GM12878 (cell line): ENCODE measurements at regions of chr5 and their contacts with region 1.

Region 1: DNA sequence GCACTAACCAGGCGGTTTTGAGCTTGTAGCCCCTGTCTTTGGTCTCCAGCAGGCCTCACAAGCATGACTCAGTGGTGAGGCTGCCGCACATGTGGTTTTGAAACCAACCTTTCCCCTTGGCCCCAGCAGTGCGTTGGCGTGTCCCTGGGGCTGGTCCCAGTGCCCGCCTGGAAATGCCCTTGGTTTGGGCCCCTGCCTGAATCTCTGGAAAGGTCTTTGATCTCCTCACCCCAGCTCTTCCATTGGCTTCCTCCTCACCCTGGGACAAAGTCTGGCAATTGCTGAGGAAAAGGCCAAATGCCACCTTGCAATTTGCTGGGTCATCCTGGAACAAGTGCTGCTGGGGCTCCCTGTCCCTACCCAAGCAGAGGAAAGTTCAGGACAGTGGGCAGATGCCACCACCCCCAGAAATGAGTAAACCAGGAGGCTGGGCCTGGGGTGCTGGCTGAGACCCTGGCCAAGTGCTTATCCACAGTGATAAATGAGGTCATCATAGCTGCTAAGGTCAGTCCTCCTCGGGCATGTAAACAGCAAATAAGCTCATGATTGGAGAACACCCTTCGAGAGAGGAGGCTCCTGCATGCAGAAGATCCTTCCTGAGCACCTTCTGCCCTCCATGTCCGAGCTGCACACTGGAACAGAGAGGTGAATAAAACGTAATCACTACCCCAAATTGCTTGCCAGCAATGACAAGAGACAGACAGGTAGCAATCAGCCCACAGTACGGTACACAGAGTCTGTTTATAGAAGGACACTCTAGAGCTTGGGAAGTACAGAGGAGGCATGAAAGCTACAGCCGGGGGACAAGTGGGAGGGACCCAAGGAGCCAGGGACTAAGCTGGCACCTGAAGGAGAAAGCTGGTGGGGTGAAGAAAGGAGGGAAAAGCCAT is 98.9 kb upstream of the CPEB4 start:
- DNase-seq: no peak
- ATAC-seq: peak; percentile 23; the same call in 2 of the 3 replicates
- H3K4me3 ChIP-seq: no peak overlapping the region
- H3K27ac ChIP-seq: no peak overlapping the region
- H3K4me1 ChIP-seq: peaks cover 50% of the 10 kb centered on the region
- H3K27me3 ChIP-seq: no peaks in the 10 kb centered on the region
- CTCF ChIP-seq: no peak
- EP300 ChIP-seq: no peak
- POLR2A ChIP-seq: no peak
- RAD21 ChIP-seq: no peak

Region 2: GRCh38 chr5:173625696-173626504 is 163.4 kb before region 1 on chr5:
- CTCF ChIA-PET with region 1: interaction called, 34 read pairs
- POLR2A ChIA-PET with region 1: no interaction called
- RAD21 ChIA-PET with region 1: interaction called, 15 read pairs
- SMC1A ChIA-PET with region 1: interaction called, 20 read pairs
- in situ Hi-C with region 1: no loop called
- intact Hi-C with region 1: no loop called
- DNase-seq: no peak
- ATAC-seq: peak; percentile 81
- H3K4me3 ChIP-seq: no peak overlapping the region
- H3K27ac ChIP-seq: no peak overlapping the region
- H3K4me1 ChIP-seq: peaks cover 9% of the 10 kb centered on the region
- H3K27me3 ChIP-seq: no peaks in the 10 kb centered on the region
- CTCF ChIP-seq: peak; percentile 60 to 71 (median 61)
- EP300 ChIP-seq: no peak
- POLR2A ChIP-seq: no peak
- RAD21 ChIP-seq: peak; percentile 85

Region 3: DNA sequence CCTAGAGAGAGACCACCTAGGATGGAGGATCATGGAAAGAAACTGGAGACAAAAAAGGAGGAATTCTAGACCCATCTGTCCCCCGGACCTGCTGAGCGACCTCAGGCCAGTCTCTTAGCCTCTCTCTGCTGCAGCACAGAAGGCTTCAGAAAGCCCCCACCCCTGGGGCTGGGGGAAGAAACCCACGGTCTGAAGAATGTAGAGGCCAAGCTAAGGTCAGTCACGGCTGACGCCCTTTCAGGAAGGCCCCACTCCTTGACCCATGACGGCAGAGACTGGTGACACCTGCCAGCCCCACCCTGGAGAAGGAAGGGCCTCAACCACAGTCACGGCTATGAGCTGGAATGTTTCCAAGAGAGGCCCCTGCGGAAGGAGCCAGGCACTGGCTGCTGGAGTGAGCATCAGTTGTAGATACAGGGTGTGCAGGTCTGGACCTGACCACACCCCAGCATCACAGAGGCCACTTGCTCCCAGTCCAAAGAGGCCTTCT is 52.3 kb before region 1 on chr5:
- CTCF ChIA-PET with region 1: interaction called, 10 read pairs
- POLR2A ChIA-PET with region 1: interaction called, 4 read pairs
- RAD21 ChIA-PET with region 1: interaction called, 45 read pairs
- SMC1A ChIA-PET with region 1: interaction called, 24 read pairs
- in situ Hi-C with region 1: no loop called
- intact Hi-C with region 1: no loop called
- DNase-seq: peak; percentile 76
- ATAC-seq: peak; percentile 91
- H3K4me3 ChIP-seq: peak overlapping the region; percentile 30; the same call in 1 of the 2 replicates
- H3K27ac ChIP-seq: peak overlapping the region; percentile 76
- H3K4me1 ChIP-seq: peaks cover 63% of the 10 kb centered on the region
- H3K27me3 ChIP-seq: no peaks in the 10 kb centered on the region
- CTCF ChIP-seq: no peak
- EP300 ChIP-seq: peak; percentile 47 to 49; a peak in 1 of 4 replicates
- POLR2A ChIP-seq: peak; percentile 48; the same call in 1 of the 2 replicates
- RAD21 ChIP-seq: 0 out of 2 replicates have a peak, but pooled peaks have one; percentile 10

Region 4: GRCh38 chr5:173823711-173824528 is 34.6 kb after region 1 on chr5:
- CTCF ChIA-PET with region 1: interaction called, 87 read pairs
- POLR2A ChIA-PET with region 1: interaction called, 36 read pairs
- RAD21 ChIA-PET with region 1: interaction called, 147 read pairs
- SMC1A ChIA-PET with region 1: interaction called, 271 read pairs
- in situ Hi-C with region 1: no loop called
- intact Hi-C with region 1: loop called (anchors 1 kb)
- DNase-seq: no peak
- ATAC-seq: no peak
- H3K4me3 ChIP-seq: no peak overlapping the region
- H3K27ac ChIP-seq: peak overlapping the region; percentile 96
- H3K4me1 ChIP-seq: peaks cover 55% of the 10 kb centered on the region
- H3K27me3 ChIP-seq: no peaks in the 10 kb centered on the region
- CTCF ChIP-seq: no peak
- EP300 ChIP-seq: no peak
- POLR2A ChIP-seq: no peak
- RAD21 ChIP-seq: no peak

Region 5: GRCh38 chr5:173895401-173896165 is 106.3 kb after region 1 on chr5:
- CTCF ChIA-PET with region 1: interaction called, 86 read pairs
- POLR2A ChIA-PET with region 1: interaction called, 8 read pairs
- RAD21 ChIA-PET with region 1: interaction called, 20 read pairs
- SMC1A ChIA-PET with region 1: interaction called, 56 read pairs
- in situ Hi-C with region 1: no loop called
- intact Hi-C with region 1: loop called (anchors 2 kb)
- DNase-seq: no peak
- ATAC-seq: peak; percentile 1; the same call in 1 of the 3 replicates
- H3K4me3 ChIP-seq: peak overlapping the region; percentile 54
- H3K27ac ChIP-seq: peak overlapping the region; percentile 65
- H3K4me1 ChIP-seq: peaks cover 3% of the 10 kb centered on the region; the same call in 1 of the 2 replicates
- H3K27me3 ChIP-seq: no peaks in the 10 kb centered on the region
- CTCF ChIP-seq: no peak
- EP300 ChIP-seq: no peak
- POLR2A ChIP-seq: no peak
- RAD21 ChIP-seq: no peak

Region 6: DNA sequence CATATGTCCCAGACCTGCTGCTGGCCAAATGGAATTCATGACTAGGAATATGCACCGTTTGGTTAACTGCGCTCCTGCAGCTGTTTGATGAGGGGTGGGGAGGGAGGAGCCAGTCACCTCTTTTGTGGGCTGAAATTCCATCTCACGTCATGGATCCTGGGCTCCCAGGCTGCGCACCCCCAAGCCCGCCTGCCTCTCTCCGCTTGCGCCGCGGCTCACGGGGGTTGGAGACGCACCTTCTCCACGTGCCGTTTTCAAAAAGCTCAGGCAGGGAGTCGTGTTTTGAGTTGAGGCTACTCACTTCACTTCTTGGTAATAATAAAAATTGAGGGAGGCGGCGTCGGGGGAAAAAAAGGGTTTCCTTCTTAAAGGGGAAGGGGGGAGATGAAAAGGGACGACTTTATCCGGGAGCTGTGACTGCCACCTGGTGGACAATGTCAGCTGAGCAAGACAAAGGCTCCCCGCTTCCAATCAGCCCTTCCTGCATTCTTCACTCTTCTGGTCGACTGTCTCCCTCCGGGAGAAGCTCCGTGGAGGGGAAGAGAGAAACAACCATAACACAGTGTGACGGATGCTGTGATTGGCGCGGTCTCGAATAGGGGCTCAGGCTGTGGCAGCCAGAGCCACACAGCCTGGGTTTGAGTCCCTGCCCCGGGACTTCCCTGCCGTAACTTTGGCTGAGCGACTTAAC is 183.8 kb after region 1 on chr5:
- CTCF ChIA-PET with region 1: interaction called, 7 read pairs
- POLR2A ChIA-PET with region 1: no interaction called
- RAD21 ChIA-PET with region 1: interaction called, 4 read pairs
- SMC1A ChIA-PET with region 1: interaction called, 8 read pairs
- in situ Hi-C with region 1: no loop called
- intact Hi-C with region 1: loop called (anchors 5 kb)
- DNase-seq: peak; percentile 40
- ATAC-seq: peak; percentile 92
- H3K4me3 ChIP-seq: peak overlapping the region; percentile 66
- H3K27ac ChIP-seq: no peak overlapping the region
- H3K4me1 ChIP-seq: peaks cover 12% of the 10 kb centered on the region
- H3K27me3 ChIP-seq: no peaks in the 10 kb centered on the region
- CTCF ChIP-seq: peak; percentile 77 to 88 (median 82); a peak in 5 of 6 replicates
- EP300 ChIP-seq: no peak
- POLR2A ChIP-seq: no peak
- RAD21 ChIP-seq: peak; percentile 84